ENCODE measurements at regions of chr2 and their contacts with region 1.

Region 1: GRCh38 chr2:11583840-11584524 is 50.1 kb downstream of the GREB1 start:
- DNase-seq: peak; percentile 45 to 70
- ATAC-seq: peak; percentile 47 to 59
- H3K4me3 ChIP-seq: no peak overlapping the region
- H3K27ac ChIP-seq: peak overlapping the region; percentile 57 to 75 (median 61)
- H3K4me1 ChIP-seq: peaks cover 5 to 17% of the 10 kb centered on the region in 2 donors
- H3K27me3 ChIP-seq: no peaks in the 10 kb centered on the region
- CTCF ChIP-seq: peak; percentile 79 to 88 (median 84)
- POLR2A ChIP-seq: no peak

Region 2: DNA sequence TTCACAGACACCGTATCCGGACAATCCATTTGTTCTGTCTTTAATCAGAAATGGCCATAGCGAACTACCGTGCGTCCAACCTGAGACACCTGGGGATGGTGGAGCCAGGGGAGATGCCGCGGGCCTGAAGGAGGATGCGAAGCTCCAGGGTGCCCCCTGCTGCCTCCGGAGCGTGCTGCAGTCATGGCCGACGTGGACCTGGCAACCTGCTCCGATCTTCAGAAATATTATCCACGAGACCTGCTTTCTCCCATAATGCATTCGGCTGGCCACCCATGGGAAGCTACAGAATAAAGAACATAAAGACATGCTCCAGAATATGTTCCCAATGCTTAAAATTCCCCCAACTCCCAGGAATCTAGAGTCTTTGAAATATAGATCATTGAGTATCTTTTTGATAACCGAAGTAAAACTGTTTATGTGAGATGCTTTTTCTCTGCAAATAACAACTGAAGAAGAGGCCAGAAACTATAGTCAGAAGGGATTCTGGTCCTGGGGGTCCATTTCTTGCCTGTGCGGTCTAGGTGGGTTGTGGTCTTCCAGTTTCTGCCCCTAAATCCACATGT is 459.4 kb before region 1 on chr2:
- in situ Hi-C with region 1: loop called in 3 of 4 experiments (anchors 25 kb)
- intact Hi-C with region 1: no loop called
- DNase-seq: peak in 1 of 2 donors; percentile 43
- ATAC-seq: peak in 1 of 2 donors; percentile 48
- H3K4me3 ChIP-seq: no peak overlapping the region
- H3K27ac ChIP-seq: no peak overlapping the region
- H3K4me1 ChIP-seq: no peaks in the 10 kb centered on the region
- H3K27me3 ChIP-seq: no peaks in the 10 kb centered on the region
- CTCF ChIP-seq: peak; percentile 49 to 75 (median 63)
- POLR2A ChIP-seq: no peak

Region 3: GRCh38 chr2:11417946-11418585 is 165.9 kb before region 1 on chr2:
- in situ Hi-C with region 1: no loop called
- intact Hi-C with region 1: loop called (anchors 5 kb)
- DNase-seq: peak in 1 of 2 donors; percentile 39
- ATAC-seq: no peak
- H3K4me3 ChIP-seq: no peak overlapping the region
- H3K27ac ChIP-seq: no peak overlapping the region
- H3K4me1 ChIP-seq: peaks cover 32 to 42% of the 10 kb centered on the region in 2 donors
- H3K27me3 ChIP-seq: no peaks in the 10 kb centered on the region
- CTCF ChIP-seq: peak in 4 of 5 experiments; percentile 37 to 61 (median 56)
- POLR2A ChIP-seq: no peak

Region 4: DNA sequence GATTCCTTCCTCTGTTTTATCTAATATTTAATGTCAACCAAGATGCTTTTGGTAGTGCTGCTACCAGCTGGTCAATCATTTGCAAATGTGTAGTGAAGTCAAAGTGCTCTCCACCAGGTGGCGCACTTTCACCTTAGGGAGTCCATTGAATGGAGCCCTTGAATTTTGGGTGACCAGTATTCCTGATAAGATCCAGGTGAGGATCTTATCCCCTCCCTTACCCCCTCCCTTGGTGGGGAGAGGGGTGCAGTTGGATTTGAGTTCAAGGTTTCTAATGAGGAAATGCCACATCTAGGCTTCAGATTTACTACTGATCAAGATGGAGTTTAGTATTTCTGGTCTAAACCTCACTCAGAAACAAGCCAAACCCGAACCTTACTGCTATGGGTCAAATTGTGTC is 106.0 kb before region 1 on chr2:
- in situ Hi-C with region 1: loop called (anchors 5 kb)
- intact Hi-C with region 1: loop called (anchors 1 kb)
- DNase-seq: peak; percentile 81 to 82
- ATAC-seq: peak; percentile 75 to 76
- H3K4me3 ChIP-seq: no peak overlapping the region
- H3K27ac ChIP-seq: no peak overlapping the region
- H3K4me1 ChIP-seq: no peaks in the 10 kb centered on the region
- H3K27me3 ChIP-seq: no peaks in the 10 kb centered on the region
- CTCF ChIP-seq: peak; percentile 76 to 92 (median 88)
- POLR2A ChIP-seq: no peak

Region 5: GRCh38 chr2:11775384-11775783 is 191.4 kb after region 1 on chr2:
- in situ Hi-C with region 1: no loop called
- intact Hi-C with region 1: no loop called
- DNase-seq: no peak
- ATAC-seq: no peak
- H3K4me3 ChIP-seq: no peak overlapping the region
- H3K27ac ChIP-seq: peak overlapping the region; percentile 13 to 66 (median 51)
- H3K4me1 ChIP-seq: peaks cover 63% of the 10 kb centered on the region in 2 donors
- H3K27me3 ChIP-seq: no peaks in the 10 kb centered on the region
- CTCF ChIP-seq: no peak
- POLR2A ChIP-seq: no peak

Measured in gastrocnemius medialis (tissue), 4 donors.